AG04449 (cell line): ENCODE measurements at regions of chr2 and their contacts with region 1.

Region 1: GRCh38 chr2:85707304-85707703 is 13.1 kb downstream of the GNLY start:
- DNase-seq: no peak
- H3K4me3 ChIP-seq: no peak overlapping the region
- CTCF ChIP-seq: peak; percentile 76

Region 2: DNA sequence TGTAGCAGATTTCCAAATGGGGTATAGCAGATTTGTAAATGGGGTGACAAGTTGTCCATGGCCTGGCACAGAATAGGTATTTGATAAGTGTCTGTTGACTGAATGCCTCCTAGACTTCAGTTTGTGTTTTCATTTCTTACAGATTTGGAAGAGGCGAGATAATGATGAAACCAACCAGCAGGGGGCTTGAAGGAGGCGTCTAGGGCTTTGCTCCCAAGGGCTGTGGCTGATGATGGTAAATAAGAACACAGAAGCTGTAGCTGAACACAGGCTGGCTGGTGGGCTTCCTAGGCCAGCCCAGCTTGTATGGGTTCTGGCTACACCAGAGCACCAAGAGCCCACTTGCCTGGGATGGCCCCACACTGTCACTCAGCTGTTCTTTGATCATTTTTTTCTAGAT is 58.7 kb before region 1 on chr2:
- CTCF ChIA-PET with region 1: interaction called, 915 read pairs
- POLR2A ChIA-PET with region 1: interaction called, 3 read pairs
- DNase-seq: no peak
- H3K4me3 ChIP-seq: no peak overlapping the region
- CTCF ChIP-seq: peak; percentile 65

Region 3: GRCh38 chr2:85663594-85664565 is 43.4 kb before region 1 on chr2:
- CTCF ChIA-PET with region 1: interaction called, 915 read pairs
- POLR2A ChIA-PET with region 1: interaction called, 3 read pairs
- DNase-seq: no peak
- H3K4me3 ChIP-seq: no peak overlapping the region
- CTCF ChIP-seq: no peak

Region 4: GRCh38 chr2:85669549-85669948 is 37.8 kb before region 1 on chr2:
- CTCF ChIA-PET with region 1: interaction called, 207 read pairs
- POLR2A ChIA-PET with region 1: interaction called, 3 read pairs
- DNase-seq: no peak
- H3K4me3 ChIP-seq: no peak overlapping the region
- CTCF ChIP-seq: no peak

Region 5: DNA sequence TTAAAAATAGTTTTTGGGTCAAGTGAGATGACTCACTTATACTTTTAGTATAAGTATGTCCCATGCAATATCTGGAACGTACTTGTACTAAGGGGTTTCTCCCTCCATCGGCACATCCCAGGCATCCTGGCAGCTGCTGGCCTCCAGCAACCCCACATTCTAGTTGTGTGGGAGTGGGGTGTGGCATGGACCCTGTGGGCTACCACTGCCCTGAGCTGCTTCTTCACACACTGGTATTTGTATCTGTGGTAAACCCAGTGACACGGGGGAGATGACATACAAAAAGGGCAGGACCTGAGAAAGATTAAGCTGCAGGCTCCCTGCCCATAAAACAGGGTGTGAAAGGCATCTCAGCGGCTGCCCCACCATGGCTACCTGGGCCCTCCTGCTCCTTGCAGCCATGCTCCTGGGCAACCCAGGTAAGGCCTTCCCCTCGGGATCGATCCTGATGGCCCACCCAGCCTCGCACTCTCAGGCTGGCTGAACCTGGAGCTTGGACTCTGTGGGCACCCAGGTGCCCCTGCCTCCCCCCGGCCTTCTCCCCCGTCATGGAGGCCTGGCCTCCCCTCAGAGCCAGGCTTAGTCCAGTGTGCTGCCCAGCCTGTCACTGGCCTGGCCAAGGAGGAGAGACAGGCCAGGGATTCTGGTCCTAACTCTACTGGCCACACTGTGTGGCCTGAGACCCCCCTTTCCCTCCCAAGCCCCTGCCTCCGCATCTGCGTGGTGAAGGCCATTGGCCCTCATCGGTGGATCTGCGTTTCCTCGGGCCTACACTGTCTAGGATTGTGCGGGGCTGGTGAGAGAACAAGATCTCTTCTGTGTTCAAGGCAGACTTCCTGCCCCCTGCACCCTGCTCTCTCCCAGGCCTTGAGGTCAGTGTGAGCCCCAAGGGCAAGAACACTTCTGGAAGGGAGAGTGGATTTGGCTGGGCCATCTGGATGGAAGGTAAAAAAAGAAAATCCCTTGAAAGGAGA is 13.0 kb before region 1 on chr2 and contains the start of gene GNLY:
- CTCF ChIA-PET with region 1: interaction called, 47 read pairs
- POLR2A ChIA-PET with region 1: no interaction called
- DNase-seq: no peak
- H3K4me3 ChIP-seq: no peak within 1 kb of the TSS
- CTCF ChIP-seq: no peak

Region 6: GRCh38 chr2:85741833-85742455 is 34.6 kb after region 1 on chr2:
- CTCF ChIA-PET with region 1: interaction called, 11 read pairs
- POLR2A ChIA-PET with region 1: no interaction called
- DNase-seq: peak; percentile 88
- H3K4me3 ChIP-seq: peak overlapping the region; percentile 23
- CTCF ChIP-seq: no peak

Region 7: DNA sequence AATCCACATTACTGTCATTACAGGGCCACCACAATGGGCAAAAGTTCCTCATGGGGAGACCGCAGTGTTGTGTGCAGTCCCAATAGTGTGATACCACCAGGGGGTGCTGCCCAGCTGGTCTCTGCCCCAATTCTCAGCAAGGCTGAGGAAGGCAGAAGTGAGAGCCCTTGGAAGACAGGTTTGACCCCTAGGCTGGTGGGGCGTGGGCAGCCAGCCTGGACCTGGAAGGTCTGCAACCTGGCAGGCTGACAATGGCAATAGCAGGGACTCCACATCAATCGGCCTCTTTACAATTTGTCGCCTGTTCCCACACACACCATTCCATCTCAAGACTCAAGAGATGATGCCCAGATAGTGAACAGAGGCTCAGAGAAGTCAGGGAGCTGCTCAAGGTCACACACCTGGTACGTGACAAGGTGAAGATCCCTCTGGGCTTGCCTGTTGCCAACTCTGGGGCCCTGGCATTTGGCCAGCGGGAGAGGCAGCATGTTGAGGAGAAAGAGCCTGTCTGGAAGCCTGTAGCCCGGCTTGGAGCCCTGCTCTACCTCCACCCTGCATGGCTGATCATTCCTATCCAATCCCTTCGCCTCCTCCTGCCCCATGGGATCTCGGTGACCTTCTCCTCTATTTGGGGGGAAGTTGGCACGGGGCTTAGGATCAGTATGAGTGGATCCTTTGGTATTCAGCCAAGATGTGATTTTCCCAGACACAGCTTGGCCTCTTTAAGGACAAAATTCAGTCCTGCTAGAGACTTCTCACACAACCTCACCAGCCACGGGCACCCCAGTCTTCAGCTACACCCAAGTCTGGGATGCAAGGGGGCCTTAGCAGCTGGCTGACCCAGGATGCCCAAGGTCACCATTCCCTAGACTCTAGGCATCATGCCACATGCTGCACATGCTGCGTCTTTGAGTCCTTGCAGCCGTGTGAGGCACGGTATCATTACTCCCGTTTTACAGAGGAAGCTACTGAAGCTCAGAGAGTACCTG is 43.6 kb after region 1 on chr2:
- CTCF ChIA-PET with region 1: interaction called, 12 read pairs
- POLR2A ChIA-PET with region 1: no interaction called
- DNase-seq: no peak
- H3K4me3 ChIP-seq: no peak overlapping the region
- CTCF ChIP-seq: peak; percentile 87